Activated B cell treated with CpG ODN at 0.5 μM for 24 hours (primary cell): ENCODE measurements at regions of chr1 and their contacts with region 1.

Region 1: DNA sequence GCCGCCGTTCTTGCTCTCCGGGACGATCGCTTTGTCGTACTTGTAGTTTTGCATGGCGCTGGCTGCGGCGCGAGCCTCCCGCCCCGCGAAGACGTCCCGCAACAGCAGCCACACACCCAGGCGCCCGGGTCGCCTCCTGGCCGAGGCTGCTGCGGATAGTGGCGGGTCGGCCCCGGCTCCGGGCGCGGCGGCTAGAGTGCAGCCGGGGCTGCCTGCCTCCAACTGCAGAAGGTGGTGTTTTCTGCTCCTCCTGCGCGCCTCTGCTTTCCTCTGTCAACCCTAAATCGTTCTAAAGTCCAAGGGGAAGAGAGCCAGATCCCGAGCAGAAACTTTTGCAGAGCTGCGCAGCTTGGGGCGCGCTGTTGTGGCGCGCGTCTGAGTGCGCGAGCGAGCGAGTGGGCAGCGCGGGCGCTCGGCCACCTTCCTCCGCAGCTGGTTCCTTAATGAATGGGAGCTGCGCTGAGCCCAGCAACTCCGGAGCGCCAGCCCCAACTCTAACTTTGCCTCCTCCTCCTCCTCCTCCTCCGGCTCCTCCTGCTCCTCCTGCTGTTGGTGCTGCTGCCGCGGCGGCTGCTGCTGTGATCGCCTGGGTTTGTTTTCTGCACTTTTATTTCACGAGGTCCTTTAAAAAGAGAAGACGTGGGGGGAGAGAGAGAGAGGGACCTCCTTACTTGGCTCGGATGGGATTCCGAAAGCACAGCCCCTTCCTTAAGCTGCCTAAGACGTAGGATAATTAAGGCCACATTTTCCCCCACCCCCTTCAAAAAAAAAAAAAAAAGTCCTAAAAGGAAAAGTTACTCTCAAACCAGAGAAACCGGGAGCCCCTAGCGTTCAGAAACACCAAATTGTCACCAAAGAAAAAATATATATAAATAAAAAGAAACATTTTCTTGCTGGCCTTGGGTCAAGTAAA is at the start of gene PLPP3:
- DNase-seq: peak; percentile 43
- ATAC-seq: peak; percentile 16
- H3K4me3 Mint-ChIP-seq: peak within 1 kb of the TSS; percentile 91
- H3K27ac Mint-ChIP-seq: peak within 1 kb of the TSS; percentile 59
- H3K4me1 Mint-ChIP-seq: peaks cover 54% of the 10 kb centered on the region
- H3K27me3 Mint-ChIP-seq: no peaks in the 10 kb centered on the region
- CTCF ChIP-seq: no peak
- total RNA-seq, gene PLPP3: 4.6 TPM in 2 replicates

Region 2: GRCh38 chr1:55215256-55216021 is 1363.8 kb before region 1 on chr1 and contains the start of gene USP24:
- CTCF ChIA-PET with region 1: no interaction called
- POLR2A ChIA-PET with region 1: no interaction called
- intact Hi-C with region 1: loop called (anchors 2 kb)
- DNase-seq: peak; percentile 79
- ATAC-seq: peak; percentile 76
- H3K4me3 Mint-ChIP-seq: peak within 1 kb of the TSS; percentile 92
- H3K27ac Mint-ChIP-seq: peak within 1 kb of the TSS; percentile 97
- H3K4me1 Mint-ChIP-seq: peaks cover 65% of the 10 kb centered on the region
- H3K27me3 Mint-ChIP-seq: no peaks in the 10 kb centered on the region
- CTCF ChIP-seq: no peak
- total RNA-seq, gene USP24: 91.4 and 93.2 TPM in 2 replicates

Region 3: GRCh38 chr1:56135069-56135863 is 444.0 kb before region 1 on chr1:
- CTCF ChIA-PET with region 1: no interaction called
- POLR2A ChIA-PET with region 1: no interaction called
- intact Hi-C with region 1: loop called (anchors 10 kb)
- DNase-seq: no peak
- ATAC-seq: peak; percentile 31
- H3K4me3 Mint-ChIP-seq: peak overlapping the region; percentile 30
- H3K27ac Mint-ChIP-seq: peak overlapping the region; percentile 13
- H3K4me1 Mint-ChIP-seq: peaks cover 42% of the 10 kb centered on the region
- H3K27me3 Mint-ChIP-seq: peaks cover 8% of the 10 kb centered on the region
- CTCF ChIP-seq: no peak

Region 4: GRCh38 chr1:56409094-56409691 is 170.0 kb before region 1 on chr1:
- CTCF ChIA-PET with region 1: interaction called, 90 read pairs
- POLR2A ChIA-PET with region 1: interaction called, 3 read pairs
- intact Hi-C with region 1: loop called (anchors 1 kb)
- DNase-seq: peak; percentile 34
- ATAC-seq: no peak
- H3K4me3 Mint-ChIP-seq: no peak overlapping the region
- H3K27ac Mint-ChIP-seq: no peak overlapping the region
- H3K4me1 Mint-ChIP-seq: peaks cover 20% of the 10 kb centered on the region
- H3K27me3 Mint-ChIP-seq: no peaks in the 10 kb centered on the region
- CTCF ChIP-seq: no peak

Region 5: DNA sequence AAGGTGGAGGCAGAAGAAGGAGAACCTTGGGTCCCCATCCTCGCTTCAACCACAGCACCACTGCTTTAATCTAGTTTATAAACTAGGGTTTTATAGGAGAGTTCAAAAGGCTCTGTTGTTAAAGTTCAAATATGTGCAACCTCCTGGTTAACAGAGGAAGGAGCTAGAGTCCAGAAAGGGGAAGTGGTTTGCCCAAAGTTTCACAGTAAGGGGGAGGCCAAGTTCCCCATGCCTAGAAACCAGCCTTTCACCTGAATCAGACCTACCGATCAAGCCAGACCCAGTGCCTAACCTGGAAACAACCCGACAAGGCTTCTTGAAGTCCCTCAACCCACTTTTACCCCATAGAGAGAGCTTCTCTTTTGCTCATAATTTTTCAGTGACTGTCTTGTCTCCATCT is 106.4 kb before region 1 on chr1:
- CTCF ChIA-PET with region 1: interaction called, 4 read pairs
- POLR2A ChIA-PET with region 1: interaction called, 4 read pairs
- intact Hi-C with region 1: loop called (anchors 2 kb)
- DNase-seq: peak; percentile 17
- ATAC-seq: peak; percentile 92
- H3K4me3 Mint-ChIP-seq: peak overlapping the region; percentile 55
- H3K27ac Mint-ChIP-seq: peak overlapping the region; percentile 61
- H3K4me1 Mint-ChIP-seq: peaks cover 57% of the 10 kb centered on the region
- H3K27me3 Mint-ChIP-seq: peaks cover 9% of the 10 kb centered on the region
- CTCF ChIP-seq: no peak

Region 6: DNA sequence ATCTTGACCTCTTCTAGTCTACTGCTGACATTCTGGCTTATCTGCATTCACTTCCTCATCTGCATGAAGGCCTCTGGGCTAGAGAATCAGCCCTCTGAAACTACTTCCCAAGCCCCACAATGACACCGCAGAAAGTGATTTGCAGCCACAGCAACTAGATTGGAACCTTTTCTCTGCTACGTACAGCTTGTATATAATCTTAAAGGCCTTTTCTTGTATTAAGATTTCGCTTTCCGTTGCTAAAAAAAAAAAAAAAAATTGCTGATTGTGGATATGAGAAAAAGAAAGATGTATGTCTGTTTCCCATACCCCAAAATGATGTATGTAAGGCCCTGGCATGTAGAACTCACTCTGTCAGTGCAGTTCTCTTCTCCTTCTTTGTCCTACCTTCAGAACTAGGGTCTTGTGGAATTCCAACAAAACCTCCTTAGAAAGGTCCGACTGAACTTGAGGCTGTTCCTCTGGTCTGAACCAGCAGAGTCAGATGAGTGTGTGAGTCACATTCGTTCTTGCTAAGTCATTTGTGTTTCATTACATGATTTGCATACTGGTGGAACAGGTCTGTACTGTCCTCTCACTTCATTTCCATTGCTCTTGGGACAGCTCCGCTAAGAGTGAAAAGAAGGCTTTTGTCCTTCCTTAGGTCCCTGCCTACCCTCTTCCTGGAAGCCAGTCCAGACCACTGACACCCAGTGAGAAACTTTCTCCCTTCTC is 62.5 kb before region 1 on chr1:
- CTCF ChIA-PET with region 1: no interaction called
- POLR2A ChIA-PET with region 1: interaction called, 9 read pairs
- intact Hi-C with region 1: loop called (anchors 2 kb)
- DNase-seq: no peak
- ATAC-seq: peak; percentile 94
- H3K4me3 Mint-ChIP-seq: peak overlapping the region; percentile 77
- H3K27ac Mint-ChIP-seq: peak overlapping the region; percentile 87
- H3K4me1 Mint-ChIP-seq: peaks cover 26% of the 10 kb centered on the region
- H3K27me3 Mint-ChIP-seq: no peaks in the 10 kb centered on the region
- CTCF ChIP-seq: no peak

Region 7: GRCh38 chr1:56525489-56526041 is 53.7 kb before region 1 on chr1:
- CTCF ChIA-PET with region 1: no interaction called
- POLR2A ChIA-PET with region 1: interaction called, 6 read pairs
- intact Hi-C with region 1: loop called (anchors 1 kb)
- DNase-seq: peak; percentile 27
- ATAC-seq: peak; percentile 31
- H3K4me3 Mint-ChIP-seq: peak overlapping the region; percentile 48
- H3K27ac Mint-ChIP-seq: peak overlapping the region; percentile 82
- H3K4me1 Mint-ChIP-seq: peaks cover 59% of the 10 kb centered on the region
- H3K27me3 Mint-ChIP-seq: no peaks in the 10 kb centered on the region
- CTCF ChIP-seq: no peak